ENCODE measurements at regions of chr10 and their contacts with region 1.

Region 1: DNA sequence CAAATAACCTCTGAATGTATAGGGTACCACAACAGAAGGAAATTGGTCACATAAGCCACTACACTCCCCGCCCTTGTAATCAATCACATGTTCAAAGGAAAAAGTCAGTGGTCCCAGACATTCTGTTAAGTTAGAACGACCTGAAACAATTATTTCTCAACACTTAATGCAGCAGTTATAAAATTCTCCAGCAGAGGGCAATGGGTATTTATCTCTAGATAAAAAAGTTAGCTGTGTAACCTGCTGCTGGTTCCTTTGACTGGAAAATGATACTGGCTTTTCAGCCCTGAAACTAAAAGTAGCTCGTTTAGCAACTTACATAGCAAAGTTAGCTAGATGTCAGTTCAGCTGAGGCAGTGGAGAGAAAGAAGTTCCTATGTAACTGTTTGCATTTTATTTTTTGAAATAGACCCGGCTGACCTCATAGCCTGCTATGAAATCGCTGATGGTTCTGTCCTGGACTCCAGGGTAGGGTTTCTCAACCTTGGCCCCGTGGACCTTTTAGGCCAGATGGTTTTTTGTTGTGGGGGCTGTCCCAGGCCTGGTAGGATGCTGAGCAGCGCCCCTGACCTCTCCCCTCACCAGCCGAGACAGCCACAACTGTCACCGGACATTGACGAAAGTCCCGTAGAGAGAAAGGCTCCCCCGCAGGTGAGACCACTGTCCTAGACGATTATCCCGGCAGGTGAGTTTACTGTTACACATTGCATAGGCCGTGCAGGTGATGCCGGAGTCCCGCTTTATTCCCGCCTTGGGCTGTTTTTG is 40.2 kb upstream of the PROSER2 start:
- DNase-seq: peak in 5 of 9 donors; percentile 36 to 63 (median 42)
- ATAC-seq: peak; percentile 63
- H3K4me3 ChIP-seq: no peak overlapping the region
- H3K4me3 Mint-ChIP-seq: no peak overlapping the region
- H3K27ac ChIP-seq: no peak overlapping the region
- H3K27ac Mint-ChIP-seq: no peak overlapping the region
- H3K4me1 ChIP-seq: no peaks in the 10 kb centered on the region
- H3K4me1 Mint-ChIP-seq: peaks cover 0 to 9% (median 0%) of the 10 kb centered on the region in 7 donors
- H3K27me3 ChIP-seq: no peaks in the 10 kb centered on the region
- H3K27me3 Mint-ChIP-seq: peaks cover 0 to 22% (median 4%) of the 10 kb centered on the region in 5 donors

Region 2: DNA sequence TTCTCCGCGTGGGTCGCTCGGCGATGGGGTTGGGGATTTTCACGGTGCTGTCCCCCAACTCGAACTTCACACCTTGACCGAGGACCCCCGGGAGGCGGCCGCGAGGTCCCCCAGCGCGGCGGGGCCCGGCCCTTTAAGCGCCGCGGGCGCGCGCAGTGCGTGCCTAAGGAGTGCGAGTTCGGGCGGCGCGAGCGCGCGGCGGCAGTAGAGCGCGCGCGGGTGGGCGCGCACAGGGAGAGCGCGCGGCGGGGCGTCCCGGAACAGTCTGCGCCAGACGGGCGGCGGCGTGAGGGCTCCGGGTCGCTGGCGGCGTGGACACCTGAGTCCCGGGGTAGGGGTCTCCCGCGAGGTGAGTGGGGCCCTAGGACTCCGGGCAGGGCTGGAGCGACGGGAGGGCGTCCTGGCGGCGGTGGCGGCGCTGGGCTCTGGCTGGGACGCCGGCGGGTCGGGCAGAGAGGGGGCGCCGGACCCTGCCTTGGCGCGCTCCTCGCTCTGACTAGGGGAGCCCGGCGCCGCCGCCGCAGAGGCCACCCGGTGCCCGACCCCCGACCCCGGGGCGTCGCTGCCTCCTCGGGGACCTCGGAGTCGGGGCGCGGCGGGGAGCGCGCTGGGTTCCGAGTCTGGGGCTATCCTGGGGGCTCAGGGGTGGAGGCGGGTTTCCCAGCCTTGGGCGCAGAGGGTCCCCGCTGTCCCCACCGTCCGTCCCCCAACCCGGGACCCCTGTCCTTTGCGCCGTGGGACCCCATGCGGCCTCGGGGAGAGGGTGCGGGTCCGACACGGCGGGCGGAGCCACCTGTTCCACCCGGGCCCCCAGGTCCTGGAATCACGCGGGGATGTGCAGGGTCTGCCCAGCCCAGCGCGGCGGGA is 40.4 kb after region 1 on chr10 and contains the start of gene PROSER2:
- CTCF ChIA-PET with region 1: interaction called, 4 read pairs
- POLR2A ChIA-PET with region 1: no interaction called
- intact Hi-C with region 1: loop called in 1 of 2 experiments (anchors 1 kb)
- DNase-seq: peak; percentile 16 to 71 (median 45)
- ATAC-seq: peak; percentile 95
- H3K4me3 ChIP-seq: peak within 1 kb of the TSS; percentile 56
- H3K4me3 Mint-ChIP-seq: peak within 1 kb of the TSS; percentile 64 to 94 (median 83)
- H3K27ac ChIP-seq: peak within 1 kb of the TSS; percentile 29
- H3K27ac Mint-ChIP-seq: peak within 1 kb of the TSS in 4 of 9 donors; percentile 14 to 81 (median 58)
- H3K4me1 ChIP-seq: peaks cover 0 to 3% of the 10 kb centered on the region in 2 donors
- H3K4me1 Mint-ChIP-seq: peaks cover 0 to 27% (median 17%) of the 10 kb centered on the region in 7 donors
- H3K27me3 ChIP-seq: peaks cover 0 to 3% of the 10 kb centered on the region in 2 donors
- H3K27me3 Mint-ChIP-seq: peaks cover 26 to 60% (median 45%) of the 10 kb centered on the region in 5 donors
- total RNA-seq, gene PROSER2: 0.07 to 4.9 (median 1.8) TPM

Region 3: DNA sequence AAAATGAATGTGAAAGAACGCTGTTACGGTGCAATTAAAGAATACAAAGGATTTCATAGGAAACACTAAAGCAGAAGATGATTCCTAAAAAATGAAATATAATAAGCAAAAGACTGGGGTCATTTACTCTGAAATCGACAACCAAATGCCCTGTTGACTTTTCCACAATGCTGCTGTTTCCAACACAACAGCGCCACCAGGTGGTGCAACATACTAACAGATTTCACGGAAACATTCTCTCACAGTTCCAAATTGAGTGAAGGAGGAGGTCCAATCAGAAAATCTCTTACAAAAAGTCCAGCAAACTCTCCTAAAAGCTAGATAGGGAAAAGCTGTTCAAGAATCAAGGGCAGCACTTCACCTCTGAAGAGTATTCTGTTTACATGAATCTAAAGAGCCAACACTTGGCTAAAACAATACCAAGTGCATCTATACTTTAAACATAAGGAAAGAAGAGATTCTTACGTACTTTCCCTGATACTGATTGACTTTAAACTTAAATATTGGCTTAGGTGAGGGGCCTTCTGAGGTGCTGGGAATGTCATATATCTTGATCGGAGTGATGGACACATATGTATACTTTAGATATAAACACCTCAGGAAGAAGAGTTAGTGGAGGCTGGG is 203.7 kb after region 1 on chr10:
- CTCF ChIA-PET with region 1: interaction called, 10 read pairs
- POLR2A ChIA-PET with region 1: no interaction called
- intact Hi-C with region 1: loop called (anchors 1 kb)
- DNase-seq: peak; percentile 31 to 68 (median 57)
- ATAC-seq: peak; percentile 76
- H3K4me3 ChIP-seq: no peak overlapping the region
- H3K4me3 Mint-ChIP-seq: no peak overlapping the region
- H3K27ac ChIP-seq: no peak overlapping the region
- H3K27ac Mint-ChIP-seq: peak overlapping the region in 4 of 9 donors; percentile 13 to 77 (median 43)
- H3K4me1 ChIP-seq: no peaks in the 10 kb centered on the region
- H3K4me1 Mint-ChIP-seq: peaks cover 6 to 10% (median 8%) of the 10 kb centered on the region in 7 donors
- H3K27me3 ChIP-seq: no peaks in the 10 kb centered on the region
- H3K27me3 Mint-ChIP-seq: no peaks in the 10 kb centered on the region

Region 4: DNA sequence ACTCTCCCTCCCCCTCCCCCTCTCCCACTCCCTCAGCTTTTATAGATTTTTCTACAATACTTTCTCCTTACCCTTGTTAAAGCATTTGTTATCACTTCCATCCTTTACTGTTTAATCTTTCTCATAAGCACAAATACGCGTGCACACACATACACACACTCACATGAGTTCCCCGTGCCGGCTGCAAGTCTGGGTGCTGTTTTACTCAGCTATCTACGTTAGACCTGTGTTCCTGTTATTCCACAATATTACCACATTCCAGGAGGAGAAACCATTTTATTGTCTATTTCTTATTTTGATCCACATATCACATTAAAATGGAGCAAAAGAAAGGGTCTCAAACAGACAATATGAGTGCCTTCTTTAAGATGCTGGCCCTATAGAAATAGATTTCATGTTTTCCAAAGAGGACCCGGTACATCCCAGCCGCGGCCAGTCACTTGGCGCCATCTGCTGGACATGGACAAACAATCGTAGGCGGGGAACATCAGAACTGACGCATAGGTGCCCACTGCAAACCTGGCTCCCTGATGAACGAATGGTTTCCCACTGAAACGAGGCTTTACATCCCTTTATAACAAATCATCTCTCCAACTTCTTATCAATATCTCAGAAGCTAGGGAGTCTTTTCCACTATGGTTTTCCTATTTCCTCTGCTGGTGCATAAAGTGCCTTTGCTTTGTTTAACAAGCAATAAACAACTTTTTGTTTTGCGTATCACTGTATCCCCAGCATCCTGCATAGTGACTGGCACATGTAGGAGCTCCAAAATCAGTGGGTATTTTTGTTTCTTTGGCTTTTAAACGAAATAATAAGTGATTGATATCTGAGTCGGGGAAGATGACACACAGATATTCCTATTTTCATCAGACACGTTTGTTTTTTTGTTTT is 1291.8 kb after region 1 on chr10:
- CTCF ChIA-PET with region 1: no interaction called
- POLR2A ChIA-PET with region 1: no interaction called
- intact Hi-C with region 1: loop called in 1 of 2 experiments (anchors 10 kb)
- DNase-seq: peak in 7 of 9 donors; percentile 7 to 45 (median 31)
- ATAC-seq: peak; percentile 60
- H3K4me3 ChIP-seq: no peak overlapping the region
- H3K4me3 Mint-ChIP-seq: no peak overlapping the region
- H3K27ac ChIP-seq: no peak overlapping the region
- H3K27ac Mint-ChIP-seq: no peak overlapping the region
- H3K4me1 ChIP-seq: no peaks in the 10 kb centered on the region
- H3K4me1 Mint-ChIP-seq: peaks cover 0 to 7% (median 0%) of the 10 kb centered on the region in 7 donors
- H3K27me3 ChIP-seq: peaks cover 0 to 5% of the 10 kb centered on the region in 2 donors
- H3K27me3 Mint-ChIP-seq: peaks cover 25 to 37% (median 33%) of the 10 kb centered on the region in 5 donors

Measured in naive thymus-derived CD4-positive, alpha-beta T cell (primary cell).